H1 (cell line): ENCODE measurements at regions of chr12 and their contacts with region 1.

Region 1: GRCh38 chr12:47736877-47737676 is 11.8 kb upstream of the ENDOU start:
- DNase-seq: no peak
- H3K4me3 ChIP-seq: no peak overlapping the region
- H3K27ac ChIP-seq: no peak overlapping the region
- H3K4me1 ChIP-seq: peaks cover 3 to 19% (median 14%) of the 10 kb centered on the region in 4 experiments
- H3K27me3 ChIP-seq: peaks cover 0 to 2% (median 0%) of the 10 kb centered on the region in 4 experiments; a peak in 1 of 7 replicates
- CTCF ChIP-seq: no peak
- EP300 ChIP-seq: no peak
- POLR2A ChIP-seq: no peak
- RAD21 ChIP-seq: no peak

Region 2: DNA sequence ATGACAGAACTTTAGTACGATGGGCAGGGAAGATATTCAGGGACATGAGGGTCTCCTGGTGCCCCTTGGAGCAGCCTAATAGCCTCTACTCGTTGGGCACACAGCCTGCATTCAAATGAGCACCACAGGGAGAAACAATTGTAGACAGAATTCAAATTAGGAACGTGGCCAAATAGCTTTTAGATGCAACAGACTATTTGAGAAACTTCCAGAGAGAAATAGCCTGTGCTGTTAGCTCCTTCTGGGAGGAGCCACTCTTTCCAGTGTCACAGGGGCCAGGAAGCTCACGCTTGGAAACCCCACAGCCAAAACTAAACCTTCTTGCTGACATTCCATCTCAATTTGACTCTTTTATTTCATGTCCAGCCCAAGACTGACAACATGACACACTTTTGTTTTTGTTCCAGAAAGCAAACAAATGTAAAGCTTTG is 145.7 kb before region 1 on chr12:
- CTCF ChIA-PET with region 1: no interaction called
- POLR2A ChIA-PET with region 1: no interaction called
- DNase-seq: no peak
- H3K4me3 ChIP-seq: no peak overlapping the region
- H3K27ac ChIP-seq: no peak overlapping the region
- H3K4me1 ChIP-seq: no peaks in the 10 kb centered on the region; a peak in 1 of 7 replicates
- H3K27me3 ChIP-seq: no peaks in the 10 kb centered on the region
- CTCF ChIP-seq: no peak
- EP300 ChIP-seq: no peak
- POLR2A ChIP-seq: no peak
- RAD21 ChIP-seq: no peak

Region 3: GRCh38 chr12:47725893-47726292 is 11.2 kb before region 1 on chr12:
- CTCF ChIA-PET with region 1: interaction called, 892 read pairs
- POLR2A ChIA-PET with region 1: interaction called, 10 read pairs
- DNase-seq: no peak
- H3K4me3 ChIP-seq: no peak overlapping the region
- H3K27ac ChIP-seq: no peak overlapping the region
- H3K4me1 ChIP-seq: no peaks in the 10 kb centered on the region
- H3K27me3 ChIP-seq: no peaks in the 10 kb centered on the region
- CTCF ChIP-seq: no peak
- EP300 ChIP-seq: no peak
- POLR2A ChIP-seq: no peak
- RAD21 ChIP-seq: no peak